Colonic mucosa (tissue), 4 donors: ENCODE measurements at regions of chr20 and their contacts with region 1.

Region 1: GRCh38 chr20:36591854-36592641 is 13.5 kb upstream of the RAB5IF start:
- DNase-seq: no peak
- H3K4me3 ChIP-seq: no peak overlapping the region
- H3K27ac ChIP-seq: no peak overlapping the region
- H3K4me1 ChIP-seq: no peaks in the 10 kb centered on the region
- H3K27me3 ChIP-seq: no peaks in the 10 kb centered on the region
- CTCF ChIP-seq: peak; percentile 17

Region 2: DNA sequence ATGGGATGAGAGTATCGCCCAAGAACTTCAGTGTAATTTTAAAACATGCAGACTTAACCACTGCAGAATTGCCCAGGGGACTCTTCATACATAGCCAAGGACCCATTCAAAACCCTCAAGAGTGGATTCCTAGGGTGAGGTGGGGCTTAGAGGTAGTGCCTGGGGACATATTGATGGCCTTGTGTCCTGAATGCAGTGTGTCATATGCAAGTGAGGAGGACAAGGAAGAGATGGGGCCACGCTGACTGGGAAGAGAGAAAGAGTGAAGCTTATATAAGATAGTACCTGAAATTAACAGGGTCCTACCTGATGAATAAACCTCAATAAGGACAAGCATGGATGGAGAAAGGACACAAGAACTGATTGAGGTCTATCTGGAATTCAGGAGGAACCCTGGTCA is 36.8 kb before region 1 on chr20:
- intact Hi-C with region 1: loop called (anchors 5 kb)
- DNase-seq: no peak
- H3K4me3 ChIP-seq: no peak overlapping the region
- H3K27ac ChIP-seq: no peak overlapping the region
- H3K4me1 ChIP-seq: no peaks in the 10 kb centered on the region
- H3K27me3 ChIP-seq: no peaks in the 10 kb centered on the region
- CTCF ChIP-seq: no peak

Region 3: DNA sequence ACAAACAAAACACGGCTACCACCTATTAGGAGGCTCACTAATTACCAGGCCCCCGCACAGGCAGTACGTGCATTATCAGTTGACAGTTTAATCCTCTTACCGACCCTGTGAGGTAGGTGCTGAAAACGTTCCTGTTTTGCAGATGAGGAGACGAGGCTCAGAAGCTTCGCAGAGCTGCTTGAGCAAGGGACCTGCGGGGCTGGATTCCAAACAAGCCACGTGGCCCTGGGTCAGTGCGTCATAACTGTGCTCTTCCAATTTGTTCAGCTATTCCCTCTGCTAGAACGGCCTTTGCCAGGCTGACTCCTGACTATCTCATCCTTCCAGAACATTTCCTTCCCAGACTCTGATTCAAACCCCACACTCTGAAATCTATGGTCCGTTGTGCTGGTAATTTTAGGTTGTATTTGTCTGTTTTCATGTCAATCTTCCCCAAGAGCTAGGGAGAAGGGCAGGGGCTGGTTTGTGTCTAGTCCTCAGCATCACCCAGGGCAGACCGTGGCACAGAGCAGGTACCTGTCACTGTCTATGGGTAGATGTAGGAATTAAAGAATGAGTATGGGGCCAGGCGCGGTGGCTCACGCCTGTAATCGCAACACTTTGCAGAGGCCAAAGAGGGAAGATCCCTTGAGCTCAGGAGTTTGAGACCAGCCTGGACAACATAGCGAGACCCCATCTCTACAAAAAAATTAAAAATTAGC is 255.1 kb after region 1 on chr20:
- intact Hi-C with region 1: no loop called
- DNase-seq: no peak
- H3K4me3 ChIP-seq: no peak overlapping the region
- H3K27ac ChIP-seq: peak overlapping the region; percentile 73
- H3K4me1 ChIP-seq: peaks cover 4% of the 10 kb centered on the region
- H3K27me3 ChIP-seq: no peaks in the 10 kb centered on the region
- CTCF ChIP-seq: no peak